Ascending aorta (tissue), 2 donors: ENCODE measurements at regions of chr2 and their contacts with region 1.

Region 1: DNA sequence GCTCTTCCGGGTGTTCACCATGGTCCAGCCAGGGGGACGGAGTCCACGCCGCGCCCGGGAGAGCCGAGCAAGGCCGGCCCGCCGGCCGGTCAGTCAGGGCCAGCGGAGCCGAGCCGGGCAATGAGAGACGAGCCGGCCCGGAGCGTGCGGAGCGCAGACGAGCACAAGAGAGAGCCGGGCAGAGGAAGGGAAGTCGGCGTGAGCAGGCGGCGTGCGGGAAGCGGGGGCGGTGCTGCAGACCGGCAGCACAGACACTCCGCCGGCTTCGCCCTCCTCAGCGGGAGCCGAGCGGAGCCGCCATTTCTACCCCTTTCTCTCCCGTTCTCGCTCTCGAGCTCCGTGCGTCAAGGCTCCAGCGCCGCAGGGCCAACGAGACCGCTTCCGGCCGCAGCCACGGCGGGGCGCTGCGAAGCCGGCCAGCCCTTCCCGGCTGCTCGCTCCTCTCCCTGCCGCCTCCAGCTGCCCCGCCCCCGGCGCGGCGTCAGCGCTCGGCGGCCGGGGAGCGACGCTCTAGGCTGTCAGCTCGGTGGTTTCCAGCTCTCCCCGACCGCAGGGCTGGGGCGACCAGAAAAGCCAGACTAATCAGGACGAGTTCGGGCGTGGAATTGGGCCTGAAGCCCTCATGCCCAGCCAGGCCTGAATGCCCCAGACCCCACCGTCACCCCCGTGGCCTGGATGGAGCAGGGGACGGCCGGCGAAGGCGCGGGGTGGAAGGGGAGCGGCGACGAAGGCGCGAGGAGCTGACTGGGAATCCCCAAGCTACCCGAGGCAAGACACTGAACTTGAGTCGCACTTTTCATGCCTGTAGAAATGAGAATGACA is at the start of gene ATAD2B:
- DNase-seq: peak; percentile 54 to 94
- H3K4me3 ChIP-seq: peak within 1 kb of the TSS; percentile 90
- H3K27ac ChIP-seq: peak within 1 kb of the TSS; percentile 99
- H3K4me1 ChIP-seq: peaks cover 0 to 20% of the 10 kb centered on the region in 2 donors
- H3K27me3 ChIP-seq: no peaks in the 10 kb centered on the region
- CTCF ChIP-seq: peak; percentile 66 to 85 (median 82)
- total RNA-seq, gene ATAD2B: 8.4 TPM

Region 2: GRCh38 chr2:23384551-23385349 is 542.2 kb before region 1 on chr2 and contains the start of gene KLHL29:
- intact Hi-C with region 1: loop called (anchors 10 kb)
- DNase-seq: peak in 1 of 2 donors; percentile 88
- H3K4me3 ChIP-seq: peak within 1 kb of the TSS; percentile 79 to 86
- H3K27ac ChIP-seq: peak within 1 kb of the TSS; percentile 80 to 87
- H3K4me1 ChIP-seq: peaks cover 0 to 2% of the 10 kb centered on the region in 2 donors
- H3K27me3 ChIP-seq: no peaks in the 10 kb centered on the region
- CTCF ChIP-seq: no peak
- total RNA-seq, gene KLHL29: 16.3 TPM

Region 3: GRCh38 chr2:24046930-24047702 is 120.2 kb after region 1 on chr2 and contains the start of gene WDCP:
- intact Hi-C with region 1: loop called (anchors 2 kb)
- DNase-seq: peak; percentile 96 to 99
- H3K4me3 ChIP-seq: peak within 1 kb of the TSS; percentile 79 to 86
- H3K27ac ChIP-seq: peak within 1 kb of the TSS; percentile 68 to 75
- H3K4me1 ChIP-seq: peaks cover 0 to 17% of the 10 kb centered on the region in 2 donors
- H3K27me3 ChIP-seq: no peaks in the 10 kb centered on the region
- CTCF ChIP-seq: no peak
- total RNA-seq, gene WDCP: 1.9 TPM

Region 4: DNA sequence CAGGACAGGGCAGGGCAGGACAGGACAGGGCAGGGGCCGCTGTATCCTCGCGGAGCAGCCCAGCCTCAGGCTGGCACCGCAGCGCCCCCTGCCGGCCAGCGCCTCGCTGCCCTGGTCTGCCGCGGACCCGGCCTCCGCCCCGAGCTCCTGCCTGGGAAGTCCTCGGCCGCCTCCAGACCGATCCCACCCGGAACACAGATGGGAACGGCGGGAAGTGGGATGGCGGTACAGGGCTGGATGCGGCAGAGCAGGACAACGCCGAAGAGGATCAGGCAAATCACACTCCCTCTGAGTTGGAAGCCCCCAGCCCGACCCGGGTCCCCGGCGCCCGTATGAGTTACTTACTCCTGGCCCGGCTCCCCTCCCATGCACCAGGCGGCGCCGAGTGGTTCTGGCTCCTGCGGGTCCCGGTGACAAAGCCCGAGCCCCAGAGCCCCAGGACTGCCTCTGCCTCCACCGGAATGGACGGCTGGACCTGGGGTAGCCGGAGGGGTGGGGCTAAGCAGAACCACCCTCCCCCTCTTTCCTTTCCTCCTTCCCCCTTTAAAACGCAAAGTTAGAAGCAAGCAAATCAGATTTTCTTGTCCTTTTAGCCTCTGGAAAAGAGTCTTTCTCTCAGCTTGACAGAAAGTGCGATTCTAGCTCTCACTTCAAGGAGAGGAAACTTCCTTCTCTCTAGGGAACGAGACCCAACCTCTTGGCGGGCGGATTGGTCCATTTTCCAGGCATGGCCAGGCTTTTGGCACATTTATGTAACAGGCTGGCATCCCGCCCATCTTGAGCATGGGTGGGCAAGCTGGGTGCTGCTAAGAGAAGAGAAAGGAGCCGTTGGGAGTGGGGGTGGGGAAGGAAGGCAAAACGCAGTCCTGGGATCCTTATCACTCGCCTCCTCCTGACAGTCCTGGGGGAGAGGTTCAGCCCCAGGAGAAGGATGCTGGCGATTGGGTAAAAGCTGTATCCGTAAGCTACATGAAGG is 157.7 kb after region 1 on chr2 and contains the start of gene TP53I3:
- intact Hi-C with region 1: loop called (anchors 1 kb)
- DNase-seq: peak; percentile 67 to 92
- H3K4me3 ChIP-seq: peak within 1 kb of the TSS; percentile 63 to 80
- H3K27ac ChIP-seq: peak within 1 kb of the TSS; percentile 77 to 92
- H3K4me1 ChIP-seq: peaks cover 0 to 9% of the 10 kb centered on the region in 2 donors
- H3K27me3 ChIP-seq: no peaks in the 10 kb centered on the region
- CTCF ChIP-seq: peak; percentile 94 to 97 (median 95)
- total RNA-seq, gene TP53I3: 1.6 TPM

Region 5: DNA sequence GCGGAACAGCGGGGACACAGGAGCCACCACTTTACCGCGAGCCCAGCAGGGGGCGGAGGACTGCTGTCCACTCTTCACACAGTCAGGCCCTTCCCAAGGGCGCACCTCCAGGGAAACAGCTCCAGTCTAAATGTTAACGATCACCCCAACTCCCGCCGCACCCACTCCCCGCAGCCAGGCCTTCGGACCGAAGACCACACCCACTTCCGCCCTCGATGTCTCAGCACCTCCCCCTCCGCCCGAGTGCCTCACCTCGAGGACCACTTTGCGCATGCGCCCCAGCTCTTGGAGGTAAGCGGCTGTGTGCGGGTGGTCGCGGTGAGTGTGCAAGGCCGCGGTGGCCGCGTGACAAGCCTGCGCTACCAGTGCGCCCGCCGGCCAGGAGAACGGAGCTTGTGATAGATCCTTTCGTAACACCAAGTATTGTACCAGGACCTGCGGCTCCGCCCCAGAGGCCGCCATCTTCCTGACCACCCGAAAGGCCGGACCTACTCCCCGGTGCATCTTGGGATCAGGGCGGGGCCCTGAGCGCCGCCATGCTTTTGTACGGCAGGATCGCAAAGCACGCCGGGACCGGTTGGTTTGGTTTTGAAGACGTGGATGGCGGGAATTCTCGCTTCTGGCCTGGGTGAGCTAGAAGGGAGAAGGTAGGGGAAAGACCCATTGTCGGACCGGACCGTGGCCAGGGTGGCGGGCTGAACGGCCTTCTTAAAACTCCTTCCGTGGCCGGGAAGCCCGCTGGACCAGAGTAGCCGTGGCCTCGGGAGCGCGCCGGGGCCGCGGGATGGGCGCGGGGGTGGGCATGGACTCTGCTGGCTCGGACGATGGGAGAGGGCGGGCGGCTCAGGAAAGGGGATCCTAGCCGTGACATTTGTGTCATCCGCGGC is 866.2 kb after region 1 on chr2 and contains the starts of genes CENPO and PTRHD1:
- intact Hi-C with region 1: loop called (anchors 5 kb)
- DNase-seq: peak; percentile 87 to 98
- H3K4me3 ChIP-seq: peak within 1 kb of the TSS; percentile 72 to 74
- H3K27ac ChIP-seq: peak within 1 kb of the TSS; percentile 94 to 95
- H3K4me1 ChIP-seq: peaks cover 4 to 8% of the 10 kb centered on the region in 2 donors
- H3K27me3 ChIP-seq: no peaks in the 10 kb centered on the region
- CTCF ChIP-seq: peak; percentile 35 to 64 (median 60)
- total RNA-seq, gene CENPO: not detected
- total RNA-seq, gene PTRHD1: 18.8 TPM